ENCODE measurements at regions of chr6 and their contacts with region 1.

Region 1: DNA sequence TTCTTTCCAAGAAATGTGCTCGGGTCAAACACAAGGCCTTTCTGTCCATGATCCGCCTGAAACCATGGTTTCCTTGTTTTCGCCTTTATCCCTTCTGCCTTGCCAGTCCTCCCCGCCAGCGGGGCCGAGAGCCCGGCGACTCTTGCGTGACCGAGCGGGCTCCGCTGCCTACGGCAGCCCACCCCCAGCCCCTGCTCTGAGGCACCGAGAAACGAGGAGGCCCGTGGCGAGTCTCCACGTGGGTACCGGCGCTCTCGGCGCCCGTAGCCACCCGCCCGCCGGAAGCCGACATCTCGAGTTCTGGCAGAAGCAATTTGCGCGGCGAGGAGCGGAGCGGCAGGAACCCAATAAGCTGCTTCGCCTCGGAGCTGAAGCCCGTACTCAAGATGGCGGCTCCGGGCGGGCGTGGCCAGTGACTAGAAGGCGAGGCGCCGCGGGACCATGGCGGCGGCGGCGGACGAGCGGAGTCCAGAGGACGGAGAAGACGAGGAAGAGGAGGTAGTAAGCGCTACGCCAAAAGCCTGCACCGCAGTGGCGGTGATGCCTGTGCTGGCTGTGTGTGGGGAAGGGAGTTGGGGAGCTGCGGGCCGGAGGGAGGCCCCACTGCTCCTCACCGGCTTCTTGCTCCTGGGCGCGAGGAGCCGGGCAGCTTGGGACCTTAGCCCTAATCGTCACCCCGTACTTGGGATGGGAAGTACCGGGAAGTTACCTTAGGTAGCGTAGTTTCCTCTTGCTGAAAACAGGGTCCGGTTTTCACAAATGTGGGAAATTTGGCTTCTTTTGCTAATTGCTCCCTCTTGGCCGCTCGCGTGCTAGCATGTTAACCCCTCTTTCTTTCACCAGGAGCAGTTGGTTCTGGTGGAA is at the start of gene GTF3C6:
- DNase-seq: peak; percentile 86 to 99 (median 94)

Region 2: GRCh38 chr6:110491644-110492317 is 466.8 kb before region 1 on chr6:
- intact Hi-C with region 1: no loop called
- DNase-seq: no peak

Region 3: GRCh38 chr6:110981202-110981600 is 22.6 kb after region 1 on chr6:
- intact Hi-C with region 1: loop called (anchors 1 kb)
- DNase-seq: no peak